Heart left ventricle (tissue), 16 donors: ENCODE measurements at regions of chr5 and their contacts with region 1.

Region 1: GRCh38 chr5:41346609-41347008 is 133.3 kb upstream of the C6 start:
- DNase-seq: no peak
- ATAC-seq: no peak
- H3K4me3 ChIP-seq: no peak overlapping the region
- H3K27ac ChIP-seq: no peak overlapping the region
- H3K4me1 ChIP-seq: peaks cover 0 to 60% (median 19%) of the 10 kb centered on the region in 12 donors
- H3K27me3 ChIP-seq: no peaks in the 10 kb centered on the region
- CTCF ChIP-seq: no peak
- POLR2A ChIP-seq: no peak

Region 2: DNA sequence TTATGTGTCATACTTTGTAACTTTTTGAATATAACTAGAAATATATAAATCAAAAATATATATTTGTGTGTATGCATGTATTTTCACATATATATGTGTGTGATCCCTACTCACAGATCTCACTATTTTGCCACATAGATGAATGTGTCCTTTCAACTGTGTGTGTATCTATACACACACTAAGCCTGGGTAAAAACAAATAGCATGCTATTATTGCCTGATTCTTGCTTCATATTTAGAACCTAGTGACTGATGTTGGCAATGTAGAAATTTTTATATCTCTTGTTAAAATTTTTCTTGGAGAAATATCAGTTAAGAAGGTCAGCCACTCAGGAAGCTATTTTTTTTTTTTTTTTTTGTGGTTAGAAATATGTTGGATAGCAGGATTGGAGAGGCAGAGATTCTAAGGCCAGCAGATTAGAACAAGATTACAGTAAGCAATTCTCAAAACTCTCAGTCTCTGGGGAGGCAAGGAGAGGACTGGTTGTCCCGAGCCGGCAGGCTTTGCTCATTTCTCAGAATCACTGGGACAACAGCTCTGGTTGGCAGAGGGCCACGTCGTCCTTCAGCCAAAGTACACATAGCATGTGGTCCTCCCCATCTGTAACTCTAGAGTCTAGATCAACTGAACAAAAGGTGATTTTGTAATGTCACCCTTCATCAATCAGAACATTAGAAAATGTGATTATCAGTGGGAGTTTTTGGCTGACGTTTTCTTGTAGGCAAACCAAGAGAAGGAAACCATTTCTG is 153.0 kb before region 1 on chr5:
- intact Hi-C with region 1: no loop called
- DNase-seq: peak; percentile 94 to 99 (median 97)
- ATAC-seq: peak; percentile 96 to 98 (median 97)
- H3K4me3 ChIP-seq: no peak overlapping the region
- H3K27ac ChIP-seq: peak overlapping the region; percentile 58 to 85 (median 78)
- H3K4me1 ChIP-seq: peaks cover 0 to 30% (median 16%) of the 10 kb centered on the region in 12 donors
- H3K27me3 ChIP-seq: no peaks in the 10 kb centered on the region
- CTCF ChIP-seq: no peak
- POLR2A ChIP-seq: no peak

Region 3: DNA sequence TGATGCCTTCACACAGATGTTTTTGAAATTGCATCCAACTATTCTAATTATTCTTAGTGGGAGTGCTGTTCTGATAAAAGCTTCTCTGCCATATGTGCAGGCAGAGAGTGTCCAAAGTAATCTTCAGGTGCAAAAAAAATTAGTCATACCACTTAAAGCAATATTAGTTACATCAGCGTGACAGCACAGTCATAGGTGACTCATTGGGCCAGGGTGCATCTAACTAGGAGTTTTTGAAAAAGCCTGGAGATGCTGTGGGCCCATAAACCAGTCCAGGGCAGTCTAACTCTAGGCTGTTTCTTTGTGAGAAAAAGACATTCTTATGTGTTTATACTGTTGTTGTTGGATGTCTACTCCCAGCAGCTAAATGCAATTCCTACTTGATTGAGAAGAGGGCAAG is 100.2 kb before region 1 on chr5:
- intact Hi-C with region 1: no loop called
- DNase-seq: peak in 1 of 5 donors; percentile 40
- ATAC-seq: peak; percentile 15 to 95 (median 52)
- H3K4me3 ChIP-seq: no peak overlapping the region
- H3K27ac ChIP-seq: no peak overlapping the region
- H3K4me1 ChIP-seq: peaks cover 0 to 2% (median 0%) of the 10 kb centered on the region in 12 donors
- H3K27me3 ChIP-seq: no peaks in the 10 kb centered on the region
- CTCF ChIP-seq: no peak
- POLR2A ChIP-seq: no peak

Region 4: GRCh38 chr5:41256400-41256799 is 90.2 kb before region 1 on chr5:
- intact Hi-C with region 1: no loop called
- DNase-seq: no peak
- ATAC-seq: no peak
- H3K4me3 ChIP-seq: no peak overlapping the region
- H3K27ac ChIP-seq: no peak overlapping the region
- H3K4me1 ChIP-seq: no peaks in the 10 kb centered on the region
- H3K27me3 ChIP-seq: no peaks in the 10 kb centered on the region
- CTCF ChIP-seq: no peak
- POLR2A ChIP-seq: no peak

Region 5: DNA sequence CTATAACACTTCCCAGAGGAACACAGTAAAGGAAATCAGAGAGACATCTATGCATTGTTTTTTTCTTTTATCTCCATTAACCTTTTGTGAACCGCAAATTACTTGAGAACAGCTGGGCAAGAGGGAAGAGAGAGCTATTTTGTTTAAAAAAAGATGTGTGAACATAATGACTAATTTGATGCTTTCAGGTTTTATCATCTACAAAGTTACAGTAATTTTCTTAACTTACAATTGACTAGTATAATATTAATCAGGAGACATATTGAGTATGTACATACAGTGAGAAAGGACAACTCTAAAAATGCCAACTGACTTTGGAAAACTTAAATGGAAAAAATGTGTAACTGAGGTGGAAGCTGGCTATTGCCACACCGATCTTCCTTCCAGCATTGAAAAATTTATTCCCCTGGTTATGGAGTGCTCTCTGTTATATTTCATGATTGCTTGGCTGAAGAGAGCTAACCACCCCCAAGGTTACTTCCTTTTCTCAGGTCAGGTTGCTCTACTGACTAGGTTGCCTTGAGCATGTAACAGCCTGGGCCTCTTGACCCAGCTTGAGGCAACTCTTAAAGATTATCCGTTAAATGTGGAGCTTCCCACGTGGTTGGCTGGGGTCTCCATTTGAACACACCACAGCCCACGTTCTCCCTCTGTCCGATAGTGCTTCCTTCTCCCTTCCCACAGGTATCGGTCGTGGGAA is 70.6 kb before region 1 on chr5:
- intact Hi-C with region 1: loop called in 1 of 10 experiments (anchors 5 kb)
- DNase-seq: no peak
- ATAC-seq: no peak
- H3K4me3 ChIP-seq: no peak overlapping the region
- H3K27ac ChIP-seq: no peak overlapping the region
- H3K4me1 ChIP-seq: peaks cover 0 to 5% (median under 1%) of the 10 kb centered on the region in 12 donors
- H3K27me3 ChIP-seq: no peaks in the 10 kb centered on the region
- CTCF ChIP-seq: no peak
- POLR2A ChIP-seq: no peak

Region 6: DNA sequence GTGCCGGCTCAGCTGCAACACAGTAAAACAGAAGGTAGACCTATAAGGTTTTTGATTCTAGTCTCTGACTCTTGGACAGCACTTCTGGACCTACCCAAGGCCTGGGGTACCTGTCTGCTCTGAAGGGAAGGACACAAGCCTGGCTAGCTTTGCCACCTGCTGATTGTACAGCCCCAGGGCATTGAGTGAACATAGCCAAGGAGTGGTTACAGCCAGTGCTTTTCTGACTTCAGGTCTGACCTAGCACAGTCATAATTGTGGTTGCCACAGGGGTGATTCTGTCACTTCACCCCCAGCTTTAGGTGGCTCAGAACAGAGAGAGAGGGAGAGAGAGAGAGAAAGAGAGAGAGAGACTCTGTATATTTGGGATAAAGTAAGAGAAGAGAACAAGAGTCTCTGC is 45.4 kb after region 1 on chr5:
- intact Hi-C with region 1: no loop called
- DNase-seq: no peak
- ATAC-seq: peak in 2 of 4 donors; percentile 13 to 36
- H3K4me3 ChIP-seq: no peak overlapping the region
- H3K27ac ChIP-seq: no peak overlapping the region
- H3K4me1 ChIP-seq: peaks cover 0 to 21% (median 0%) of the 10 kb centered on the region in 12 donors
- H3K27me3 ChIP-seq: no peaks in the 10 kb centered on the region
- CTCF ChIP-seq: no peak
- POLR2A ChIP-seq: no peak